ENCODE measurements at regions of chr5 and their contacts with region 1.

Region 1: GRCh38 chr5:172106511-172107356 is 81.3 kb downstream of the STK10 start:
- DNase-seq: peak; percentile 71
- H3K4me3 Mint-ChIP-seq: no peak overlapping the region
- H3K27ac Mint-ChIP-seq: peak overlapping the region; percentile 50
- H3K4me1 Mint-ChIP-seq: peaks cover 40% of the 10 kb centered on the region
- H3K27me3 Mint-ChIP-seq: no peaks in the 10 kb centered on the region

Region 2: DNA sequence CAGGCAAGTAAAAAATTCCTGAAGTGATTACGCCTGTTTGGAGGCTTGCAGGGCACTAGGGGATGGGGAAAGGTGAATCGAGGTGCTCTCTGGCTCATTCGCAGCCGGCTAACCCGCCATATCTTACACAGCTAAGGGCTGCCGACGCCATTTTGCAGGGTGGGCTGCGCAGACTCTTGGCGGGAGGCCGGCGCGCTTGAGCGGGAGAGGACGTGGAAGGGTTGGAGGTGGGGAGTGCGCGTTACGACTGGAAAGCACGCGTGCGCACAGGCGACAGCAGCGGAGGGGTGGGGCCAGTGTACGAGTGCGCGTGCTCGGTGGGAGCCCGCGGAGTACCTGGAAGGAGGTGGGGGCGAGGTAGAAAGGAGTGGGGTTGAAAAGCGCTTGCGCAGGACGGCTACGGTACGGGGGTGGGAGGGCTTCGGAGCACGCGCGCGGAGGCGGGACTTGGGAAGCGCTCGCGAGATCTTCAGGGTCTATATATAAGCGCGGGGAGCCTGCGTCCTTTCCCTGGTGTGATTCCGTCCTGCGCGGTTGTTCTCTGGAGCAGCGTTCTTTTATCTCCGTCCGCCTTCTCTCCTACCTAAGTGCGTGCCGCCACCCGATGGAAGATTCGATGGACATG is 719.3 kb before region 1 on chr5 and contains the start of gene NPM1:
- CTCF ChIA-PET with region 1: no interaction called
- intact Hi-C with region 1: loop called (anchors 5 kb)
- DNase-seq: peak; percentile 98
- H3K4me3 Mint-ChIP-seq: peak within 1 kb of the TSS; percentile 98
- H3K27ac Mint-ChIP-seq: peak within 1 kb of the TSS; percentile 98
- H3K4me1 Mint-ChIP-seq: peaks cover 37% of the 10 kb centered on the region
- H3K27me3 Mint-ChIP-seq: no peaks in the 10 kb centered on the region
- total RNA-seq, gene NPM1: 3,194 to 3,467 TPM

Region 3: DNA sequence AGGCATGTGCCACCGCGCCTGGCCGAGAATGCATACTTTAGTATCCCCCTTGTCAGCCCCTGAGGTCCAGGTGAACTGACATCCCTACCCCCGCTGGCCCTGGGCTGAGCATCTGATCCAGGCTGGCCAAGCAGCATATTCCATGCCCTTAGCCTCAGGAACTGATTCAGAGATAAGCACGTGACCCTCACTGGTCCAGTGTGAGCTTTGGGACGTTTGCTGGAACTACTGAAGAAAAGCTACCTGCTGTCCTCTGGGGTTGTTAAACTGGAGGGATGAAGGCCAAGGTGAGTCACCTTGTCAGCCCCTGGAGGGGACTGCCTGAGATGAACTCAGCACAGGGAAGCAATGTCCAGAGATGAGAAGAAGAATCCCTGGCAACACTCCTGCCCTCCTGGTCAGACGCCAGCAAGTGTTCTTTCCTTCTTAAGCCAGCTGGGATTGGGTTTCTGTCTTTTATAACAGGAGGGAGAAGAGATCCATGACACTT is 41.2 kb before region 1 on chr5:
- CTCF ChIA-PET with region 1: interaction called, 5 read pairs
- intact Hi-C with region 1: loop called (anchors 1 kb)
- DNase-seq: no peak
- H3K4me3 Mint-ChIP-seq: no peak overlapping the region
- H3K27ac Mint-ChIP-seq: no peak overlapping the region
- H3K4me1 Mint-ChIP-seq: peaks cover 56% of the 10 kb centered on the region
- H3K27me3 Mint-ChIP-seq: no peaks in the 10 kb centered on the region

Region 4: DNA sequence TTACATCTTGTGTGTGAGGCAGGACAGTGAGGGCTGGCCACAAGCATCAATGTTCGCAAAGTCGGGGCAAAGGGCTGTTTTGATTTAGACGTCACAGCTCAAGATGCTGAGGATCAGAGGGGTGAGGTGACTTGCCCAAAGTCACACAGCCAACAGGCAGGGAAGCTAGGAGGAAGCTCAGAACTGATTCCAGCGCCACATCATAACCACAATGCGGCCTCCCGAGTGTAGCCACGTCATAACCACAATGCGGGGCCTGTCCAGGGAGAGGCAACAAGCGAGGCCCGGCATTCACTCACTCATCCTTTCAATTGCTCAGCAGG is 67.1 kb after region 1 on chr5:
- CTCF ChIA-PET with region 1: interaction called, 25 read pairs
- intact Hi-C with region 1: loop called (anchors 1 kb)
- DNase-seq: peak; percentile 97
- H3K4me3 Mint-ChIP-seq: peak overlapping the region; percentile 89
- H3K27ac Mint-ChIP-seq: peak overlapping the region; percentile 94
- H3K4me1 Mint-ChIP-seq: peaks cover 90% of the 10 kb centered on the region
- H3K27me3 Mint-ChIP-seq: no peaks in the 10 kb centered on the region

Region 5: DNA sequence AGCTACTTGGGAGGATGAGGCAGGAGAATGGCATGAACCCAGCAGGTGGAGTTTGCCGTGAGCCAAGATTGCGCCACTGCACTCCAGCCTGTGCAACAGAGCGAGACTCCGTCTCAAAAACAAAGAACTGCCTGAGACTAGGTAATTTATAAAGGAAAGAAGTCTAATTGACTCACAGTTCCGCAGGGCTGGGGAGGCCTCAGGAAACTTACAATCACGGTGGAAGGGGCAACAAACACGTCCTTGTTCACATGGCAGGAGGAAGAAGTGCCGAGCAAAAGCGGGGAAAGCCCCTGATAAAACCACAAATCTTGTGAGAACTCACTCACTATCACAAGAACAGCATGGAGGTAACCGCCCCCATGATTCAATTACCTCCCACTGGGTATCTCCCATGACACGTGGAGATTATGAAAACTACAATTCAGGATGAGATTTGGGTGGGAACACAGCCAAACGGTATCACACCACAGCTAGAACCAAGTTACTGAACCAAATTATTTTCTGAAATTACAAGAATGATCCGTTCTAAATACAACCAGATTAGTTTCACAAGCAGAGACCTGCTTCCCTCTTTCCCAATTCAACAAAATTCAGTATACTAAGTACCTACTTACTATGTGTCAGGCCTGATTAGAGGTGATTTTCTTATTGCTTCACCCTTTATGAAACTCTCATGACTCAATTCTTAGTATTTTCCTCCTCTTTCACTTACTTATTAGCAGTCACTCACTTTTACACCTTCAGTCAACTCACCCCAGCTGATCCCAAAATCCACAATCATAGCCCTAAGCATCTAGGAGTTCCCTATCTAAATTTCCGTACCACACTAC is 168.4 kb after region 1 on chr5:
- CTCF ChIA-PET with region 1: interaction called, 3 read pairs
- intact Hi-C with region 1: loop called (anchors 1 kb)
- DNase-seq: peak; percentile 88
- H3K4me3 Mint-ChIP-seq: no peak overlapping the region
- H3K27ac Mint-ChIP-seq: peak overlapping the region; percentile 73
- H3K4me1 Mint-ChIP-seq: peaks cover 34% of the 10 kb centered on the region
- H3K27me3 Mint-ChIP-seq: no peaks in the 10 kb centered on the region

Region 6: DNA sequence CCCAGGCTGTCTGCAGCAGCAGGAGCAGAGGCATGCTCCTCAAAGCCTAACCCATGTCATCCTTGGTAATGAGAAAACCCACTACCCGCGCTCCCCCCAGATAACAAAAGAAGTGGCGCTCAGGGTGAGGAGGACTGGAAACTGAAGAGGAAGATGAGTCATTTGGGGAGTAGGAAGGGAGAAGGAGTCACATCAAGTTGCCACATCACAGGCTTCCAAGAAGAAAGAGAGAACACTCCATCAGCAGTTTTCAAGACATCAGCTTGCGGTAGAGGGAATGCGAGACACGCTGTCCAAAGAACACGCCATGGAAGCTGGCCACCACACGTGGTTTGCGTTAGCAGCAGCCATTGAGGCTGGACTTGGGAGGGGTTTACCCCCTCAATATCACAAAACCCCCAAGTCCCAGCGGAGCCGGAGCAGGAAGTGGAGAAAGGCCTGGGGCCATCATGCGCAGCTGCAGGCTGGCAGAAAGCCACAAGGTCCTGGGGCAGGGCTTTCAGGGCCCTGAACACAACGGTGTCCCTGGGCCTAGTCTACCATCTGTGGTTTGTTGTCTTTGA is 306.1 kb after region 1 on chr5:
- CTCF ChIA-PET with region 1: no interaction called
- intact Hi-C with region 1: loop called (anchors 1 kb)
- DNase-seq: peak; percentile 26
- H3K4me3 Mint-ChIP-seq: no peak overlapping the region
- H3K27ac Mint-ChIP-seq: no peak overlapping the region
- H3K4me1 Mint-ChIP-seq: peaks cover 25% of the 10 kb centered on the region
- H3K27me3 Mint-ChIP-seq: peaks cover 4% of the 10 kb centered on the region